ENCODE measurements at regions of chr18 and their contacts with region 1.

Region 1: GRCh38 chr18:3623769-3624545 is 174.0 kb downstream of the TGIF1 start:
- DNase-seq: peak; percentile 44
- H3K4me3 Mint-ChIP-seq: peak overlapping the region; percentile 28
- H3K27ac Mint-ChIP-seq: peak overlapping the region; percentile 86
- H3K4me1 Mint-ChIP-seq: peaks cover 32% of the 10 kb centered on the region
- H3K27me3 Mint-ChIP-seq: no peaks in the 10 kb centered on the region

Region 2: DNA sequence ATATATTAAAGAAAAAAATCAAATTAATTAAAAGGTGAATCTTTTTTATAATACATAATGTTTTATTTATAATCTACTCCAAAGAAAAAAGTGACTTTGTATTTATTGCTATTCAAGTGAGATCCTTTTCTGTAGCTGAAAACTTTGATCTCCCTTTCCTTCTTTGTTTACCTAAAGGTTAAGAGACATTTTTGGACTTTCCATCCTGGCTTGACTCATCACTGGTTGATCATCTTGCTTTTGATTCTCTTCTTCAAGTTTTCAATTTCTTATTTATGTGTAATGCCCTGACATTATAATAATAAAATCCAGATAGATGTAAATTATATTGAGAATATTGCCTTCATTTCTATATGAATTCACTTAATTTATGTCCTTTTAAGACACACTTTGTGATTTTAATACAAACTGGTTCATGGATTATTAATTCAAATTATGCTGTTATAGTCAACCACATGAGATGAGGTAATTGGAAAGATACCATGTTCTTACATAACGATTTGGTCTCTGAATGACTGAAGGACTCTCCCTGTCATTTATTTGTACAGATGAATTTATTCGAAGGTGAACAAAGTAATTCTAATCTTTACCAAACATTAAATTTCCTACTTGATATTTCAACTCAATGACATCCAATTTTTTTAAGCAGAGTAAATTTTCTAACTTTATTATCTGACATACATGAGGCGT is 10.4 kb after region 1 on chr18:
- CTCF ChIA-PET with region 1: no interaction called
- intact Hi-C with region 1: loop called (anchors 1 kb)
- DNase-seq: no peak
- H3K4me3 Mint-ChIP-seq: no peak overlapping the region
- H3K27ac Mint-ChIP-seq: no peak overlapping the region
- H3K4me1 Mint-ChIP-seq: peaks cover 33% of the 10 kb centered on the region
- H3K27me3 Mint-ChIP-seq: no peaks in the 10 kb centered on the region

Region 3: GRCh38 chr18:3645384-3646156 is 21.6 kb after region 1 on chr18:
- CTCF ChIA-PET with region 1: no interaction called
- intact Hi-C with region 1: loop called (anchors 1 kb)
- DNase-seq: no peak
- H3K4me3 Mint-ChIP-seq: no peak overlapping the region
- H3K27ac Mint-ChIP-seq: no peak overlapping the region
- H3K4me1 Mint-ChIP-seq: peaks cover 32% of the 10 kb centered on the region
- H3K27me3 Mint-ChIP-seq: no peaks in the 10 kb centered on the region

Region 4: GRCh38 chr18:3885209-3885792 is 261.3 kb after region 1 on chr18:
- CTCF ChIA-PET with region 1: no interaction called
- intact Hi-C with region 1: no loop called
- DNase-seq: no peak
- H3K4me3 Mint-ChIP-seq: no peak overlapping the region
- H3K27ac Mint-ChIP-seq: no peak overlapping the region
- H3K4me1 Mint-ChIP-seq: no peaks in the 10 kb centered on the region
- H3K27me3 Mint-ChIP-seq: peaks cover 11% of the 10 kb centered on the region

Measured in activated naive CD4-positive, alpha-beta T cell treated with anti-CD3 and anti-CD28 coated beads for 36 hours (primary cell).